ENCODE measurements at regions of chr2 and their contacts with region 1.

Region 1: GRCh38 chr2:226233388-226233787 is 566.2 kb downstream of the IRS1 start:
- DNase-seq: no peak
- CTCF ChIP-seq: no peak

Region 2: DNA sequence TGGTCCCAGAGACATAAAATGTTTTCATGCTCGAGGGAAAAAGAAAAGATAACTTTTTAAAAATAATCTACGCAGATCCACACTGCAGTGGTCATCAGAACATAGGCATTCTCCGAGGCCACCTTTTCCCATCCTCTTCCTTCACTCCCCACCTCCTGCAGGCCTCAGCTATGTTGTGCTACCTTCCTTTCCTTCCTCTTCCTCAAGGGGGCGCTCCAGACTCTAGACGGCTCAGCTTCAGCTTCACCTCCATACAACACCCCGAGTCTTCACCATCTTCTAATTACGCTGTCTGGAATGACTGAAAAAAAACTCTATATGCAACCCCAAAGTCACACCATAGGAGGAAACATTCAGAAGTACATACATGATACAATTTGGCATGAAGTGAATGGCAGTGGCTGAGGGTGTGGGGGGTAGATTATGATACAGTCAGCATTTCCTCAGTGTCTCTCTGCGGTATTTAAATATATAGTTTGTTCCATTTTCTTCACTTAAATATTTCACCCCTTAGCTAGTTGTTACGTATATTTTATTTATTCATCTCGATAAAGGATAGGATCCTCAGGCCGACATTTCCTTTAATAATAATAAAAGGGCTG is 17.4 kb before region 1 on chr2:
- CTCF ChIA-PET with region 1: interaction called, 13 read pairs
- POLR2A ChIA-PET with region 1: no interaction called
- DNase-seq: peak; percentile 19
- CTCF ChIP-seq: peak; percentile 68